Right ventricle myocardium inferior (tissue), 1 donor: ENCODE measurements at regions of chr2 and their contacts with region 1.

Region 1: GRCh38 chr2:71000780-71001591 is 6.3 kb upstream of the TEX261 start:
- DNase-seq: peak; percentile 90
- ATAC-seq: peak; percentile 80

Region 2: DNA sequence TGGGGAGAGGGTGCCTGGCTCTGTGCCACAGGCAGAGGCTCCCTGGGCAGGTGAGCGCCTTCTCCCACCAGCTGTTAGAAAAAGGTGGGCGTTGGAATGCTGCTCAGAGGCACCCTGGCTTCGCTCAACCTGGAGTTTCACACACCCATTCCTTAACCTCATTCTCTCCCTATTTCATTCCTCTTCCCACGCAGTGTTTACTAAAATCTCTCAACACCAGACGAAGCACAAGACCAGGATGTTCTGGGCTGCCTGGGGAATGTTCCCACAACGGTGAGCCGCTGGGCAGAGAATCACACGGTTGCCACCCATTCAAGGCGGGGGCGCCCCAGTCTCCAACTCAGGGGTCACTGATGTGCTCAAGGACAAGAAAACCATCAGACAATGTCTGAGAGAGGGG is 511.8 kb before region 1 on chr2:
- intact Hi-C with region 1: no loop called
- DNase-seq: no peak
- ATAC-seq: no peak

Region 3: GRCh38 chr2:70964596-70965386 is 36.2 kb before region 1 on chr2:
- intact Hi-C with region 1: loop called (anchors 5 kb)
- DNase-seq: peak; percentile 83
- ATAC-seq: peak; percentile 75